ENCODE measurements at regions of chr11 and their contacts with region 1.

Region 1: GRCh38 chr11:85647604-85648299 is at the start of gene TMEM126A:
- DNase-seq: peak; percentile 85 to 86
- H3K4me3 ChIP-seq: peak within 1 kb of the TSS; percentile 64 to 89 (median 74)
- H3K27ac ChIP-seq: peak within 1 kb of the TSS; percentile 87 to 92
- H3K4me1 ChIP-seq: peaks cover 0 to 10% of the 10 kb centered on the region in 2 donors
- H3K27me3 ChIP-seq: no peaks in the 10 kb centered on the region
- CTCF ChIP-seq: no peak
- POLR2A ChIP-seq: no peak
- total RNA-seq, gene TMEM126A: 18.6 to 33.9 (median 23.9) TPM

Region 2: GRCh38 chr11:85685820-85686459 is 38.2 kb after region 1 on chr11 and contains the start of gene CCDC89:
- intact Hi-C with region 1: loop called (anchors 2 kb)
- DNase-seq: peak in 1 of 2 donors; percentile 77
- H3K4me3 ChIP-seq: peak within 1 kb of the TSS; percentile 38 to 59 (median 49)
- H3K27ac ChIP-seq: peak within 1 kb of the TSS; percentile 71 to 75
- H3K4me1 ChIP-seq: no peaks in the 10 kb centered on the region
- H3K27me3 ChIP-seq: no peaks in the 10 kb centered on the region
- CTCF ChIP-seq: no peak
- POLR2A ChIP-seq: no peak
- total RNA-seq, gene CCDC89: 1.6 to 2.6 (median 2.6) TPM